ENCODE measurements at regions of chr9 and their contacts with region 1.

Region 1: GRCh38 chr9:126514047-126514821 is 99.5 kb upstream of the LMX1B start:
- DNase-seq: peak; percentile 54 to 82
- ATAC-seq: peak; percentile 60 to 91 (median 78)
- H3K4me3 ChIP-seq: peak overlapping the region in 6 of 10 donors; percentile 5 to 25 (median 14)
- H3K27ac ChIP-seq: peak overlapping the region in 1 of 10 donors; percentile 53
- H3K4me1 ChIP-seq: peaks cover 4 to 36% (median 23%) of the 10 kb centered on the region in 9 donors
- H3K27me3 ChIP-seq: peaks cover 13 to 98% (median 83%) of the 10 kb centered on the region in 7 donors
- CTCF ChIP-seq: peak in 8 of 9 donors; percentile 31 to 73 (median 62)

Region 2: DNA sequence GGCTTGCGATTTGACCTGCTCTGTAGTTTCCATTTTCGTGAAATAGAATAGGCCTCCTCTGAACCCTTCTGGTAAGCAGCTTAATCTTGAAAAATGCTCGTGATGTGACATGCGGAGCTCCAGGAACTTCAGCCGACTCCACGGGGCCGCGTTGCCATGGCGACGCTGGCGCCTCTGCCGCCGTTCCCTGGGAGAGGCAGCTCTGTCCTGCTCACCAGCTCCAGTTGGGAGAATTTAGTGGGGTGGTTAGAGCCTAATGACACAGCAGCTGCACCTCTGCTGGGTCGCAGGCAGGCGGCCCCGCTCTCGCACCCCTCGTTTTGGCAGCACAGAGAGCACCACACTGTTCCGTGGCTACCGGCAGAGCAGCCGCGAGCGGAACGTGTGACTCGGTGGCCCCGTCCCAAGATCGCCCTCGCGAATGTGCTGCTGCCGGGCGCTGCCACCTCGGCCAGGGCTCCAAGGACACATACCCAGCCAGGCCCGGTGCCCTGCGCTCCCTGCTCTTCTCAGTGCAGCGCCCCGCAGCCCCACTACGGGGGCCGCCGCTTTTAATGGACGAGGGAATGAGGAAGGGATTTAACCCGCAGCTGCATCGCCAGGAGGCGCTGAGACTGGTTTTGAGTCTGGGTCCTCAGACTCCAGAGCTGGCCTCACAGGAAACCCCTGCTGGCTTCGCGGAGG is 31.7 kb before region 1 on chr9:
- intact Hi-C with region 1: no loop called
- DNase-seq: peak in 1 of 2 donors; percentile 59
- ATAC-seq: peak in 7 of 8 donors; percentile 33 to 62 (median 50)
- H3K4me3 ChIP-seq: peak overlapping the region in 3 of 10 donors; percentile 1 to 17 (median 2)
- H3K27ac ChIP-seq: no peak overlapping the region
- H3K4me1 ChIP-seq: peaks cover 0 to under 1% (median 0%) of the 10 kb centered on the region in 9 donors
- H3K27me3 ChIP-seq: no peaks in the 10 kb centered on the region
- CTCF ChIP-seq: no peak

Region 3: GRCh38 chr9:126500684-126501382 is 13.4 kb before region 1 on chr9:
- intact Hi-C with region 1: no loop called
- DNase-seq: peak; percentile 74 to 79
- ATAC-seq: peak; percentile 65 to 88 (median 80)
- H3K4me3 ChIP-seq: no peak overlapping the region
- H3K27ac ChIP-seq: no peak overlapping the region
- H3K4me1 ChIP-seq: peaks cover 0 to 29% (median 22%) of the 10 kb centered on the region in 9 donors
- H3K27me3 ChIP-seq: peaks cover 0 to 14% (median 0%) of the 10 kb centered on the region in 7 donors
- CTCF ChIP-seq: peak; percentile 96 to 99 (median 97)

Region 4: DNA sequence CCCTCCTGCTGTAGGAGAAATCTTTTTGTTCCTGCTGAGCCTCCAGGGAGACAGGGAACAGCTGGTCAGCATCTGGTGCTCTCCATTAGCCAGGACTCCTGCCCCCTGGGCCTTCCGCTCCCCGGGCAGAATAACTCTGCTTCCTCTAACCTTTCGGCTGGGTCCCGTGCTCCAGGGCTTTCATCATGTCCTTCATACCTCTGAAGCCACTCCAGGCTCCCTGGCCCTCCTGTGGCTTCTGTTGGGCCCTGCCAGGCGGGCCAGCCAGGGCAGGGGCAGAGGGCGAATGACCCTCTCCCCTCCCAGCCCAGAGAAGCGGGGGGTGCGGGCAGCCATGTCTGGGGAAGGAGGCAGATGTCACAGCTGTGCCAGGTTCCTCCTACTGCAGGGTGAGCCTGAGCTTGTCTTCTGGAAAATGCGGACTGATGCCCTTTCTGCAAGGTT is 17.8 kb after region 1 on chr9:
- intact Hi-C with region 1: no loop called
- DNase-seq: peak; percentile 46 to 59
- ATAC-seq: peak; percentile 79 to 92 (median 82)
- H3K4me3 ChIP-seq: no peak overlapping the region
- H3K27ac ChIP-seq: peak overlapping the region in 8 of 10 donors; percentile 31 to 83 (median 48)
- H3K4me1 ChIP-seq: peaks cover 0 to 33% (median 0%) of the 10 kb centered on the region in 9 donors
- H3K27me3 ChIP-seq: peaks cover 0 to 52% (median 35%) of the 10 kb centered on the region in 7 donors
- CTCF ChIP-seq: no peak

Region 5: GRCh38 chr9:126549246-126550006 is 35.2 kb after region 1 on chr9:
- intact Hi-C with region 1: loop called in 1 of 10 experiments (anchors 5 kb)
- DNase-seq: no peak
- ATAC-seq: no peak
- H3K4me3 ChIP-seq: no peak overlapping the region
- H3K27ac ChIP-seq: no peak overlapping the region
- H3K4me1 ChIP-seq: peaks cover 0 to 8% (median 0%) of the 10 kb centered on the region in 9 donors
- H3K27me3 ChIP-seq: no peaks in the 10 kb centered on the region
- CTCF ChIP-seq: no peak

Region 6: GRCh38 chr9:126558051-126558665 is 43.9 kb after region 1 on chr9:
- intact Hi-C with region 1: loop called in 2 of 10 experiments (anchors 5 kb)
- DNase-seq: peak; percentile 48 to 50
- ATAC-seq: peak; percentile 63 to 83 (median 72)
- H3K4me3 ChIP-seq: no peak overlapping the region
- H3K27ac ChIP-seq: no peak overlapping the region
- H3K4me1 ChIP-seq: peaks cover 0 to 5% (median 0%) of the 10 kb centered on the region in 9 donors
- H3K27me3 ChIP-seq: peaks cover 0 to 28% (median 10%) of the 10 kb centered on the region in 7 donors
- CTCF ChIP-seq: peak; percentile 82 to 91 (median 86)

Region 7: GRCh38 chr9:126636983-126637798 is 123.0 kb after region 1 on chr9:
- intact Hi-C with region 1: no loop called
- DNase-seq: no peak
- ATAC-seq: no peak
- H3K4me3 ChIP-seq: no peak overlapping the region
- H3K27ac ChIP-seq: no peak overlapping the region
- H3K4me1 ChIP-seq: peaks cover 0 to 12% (median 7%) of the 10 kb centered on the region in 9 donors
- H3K27me3 ChIP-seq: peaks cover 4 to 93% (median 72%) of the 10 kb centered on the region in 7 donors
- CTCF ChIP-seq: no peak

Region 8: DNA sequence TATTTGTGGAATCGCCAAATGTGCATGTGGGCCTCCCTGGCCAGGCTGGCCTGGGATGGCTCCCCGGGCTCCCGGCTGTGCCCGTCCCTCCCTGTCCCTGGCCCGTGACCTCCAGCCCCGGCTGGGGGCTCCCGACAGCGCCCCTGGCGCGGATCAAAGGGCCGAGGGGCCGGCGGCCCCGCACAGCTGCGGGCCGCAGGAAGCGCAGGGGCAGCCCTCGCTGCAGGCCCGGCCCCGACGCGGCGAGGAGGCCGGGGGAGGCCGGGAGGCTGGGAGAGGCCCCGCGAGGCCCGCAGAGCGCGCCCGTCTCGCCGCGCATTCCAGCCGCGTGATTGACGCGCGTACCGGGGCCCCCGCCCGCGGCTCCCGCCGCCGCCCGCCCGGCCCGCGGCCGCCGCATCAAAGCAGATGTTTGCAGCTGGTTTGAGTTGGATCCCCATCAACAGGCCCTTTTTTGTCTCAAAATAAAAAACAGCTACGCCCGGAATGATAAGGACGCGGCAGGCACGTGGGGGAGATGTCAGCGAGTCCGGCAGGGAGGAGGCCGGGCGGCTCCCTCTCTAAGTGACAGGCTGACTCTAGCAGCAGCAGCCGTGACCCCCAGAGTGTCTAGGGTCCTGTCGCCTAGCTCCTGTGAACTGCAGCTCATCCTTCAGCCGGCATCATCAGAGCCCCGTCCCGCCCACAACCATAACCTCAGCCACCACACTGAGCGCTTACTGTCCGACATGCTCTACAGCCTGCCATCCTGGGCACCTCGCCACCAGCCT is 168.9 kb after region 1 on chr9:
- intact Hi-C with region 1: loop called in 1 of 10 experiments (anchors 10 kb)
- DNase-seq: peak in 1 of 2 donors; percentile 25
- ATAC-seq: peak in 6 of 8 donors; percentile 43 to 71 (median 48)
- H3K4me3 ChIP-seq: peak overlapping the region in 4 of 10 donors; percentile 3 to 28 (median 21)
- H3K27ac ChIP-seq: no peak overlapping the region
- H3K4me1 ChIP-seq: peaks cover 0 to 12% (median 5%) of the 10 kb centered on the region in 9 donors
- H3K27me3 ChIP-seq: peaks cover 0 to 98% (median 85%) of the 10 kb centered on the region in 7 donors
- CTCF ChIP-seq: no peak

Measured in heart right ventricle (tissue), 16 donors.